ENCODE measurements at regions of chr1 and their contacts with region 1.

Region 1: GRCh38 chr1:55673416-55673815 is 458.3 kb upstream of the USP24 start:
- DNase-seq: no peak
- H3K4me3 ChIP-seq: no peak overlapping the region
- H3K27ac ChIP-seq: no peak overlapping the region
- H3K4me1 ChIP-seq: no peaks in the 10 kb centered on the region
- H3K27me3 ChIP-seq: no peaks in the 10 kb centered on the region
- CTCF ChIP-seq: no peak
- POLR2A ChIP-seq: no peak

Region 2: GRCh38 chr1:55623326-55623725 is 50.1 kb before region 1 on chr1:
- intact Hi-C with region 1: no loop called
- DNase-seq: no peak
- H3K4me3 ChIP-seq: no peak overlapping the region
- H3K27ac ChIP-seq: no peak overlapping the region
- H3K4me1 ChIP-seq: no peaks in the 10 kb centered on the region
- H3K27me3 ChIP-seq: no peaks in the 10 kb centered on the region
- CTCF ChIP-seq: no peak
- POLR2A ChIP-seq: no peak

Region 3: GRCh38 chr1:55634504-55634903 is 38.9 kb before region 1 on chr1:
- intact Hi-C with region 1: no loop called
- DNase-seq: peak in 1 of 2 donors; percentile 56
- H3K4me3 ChIP-seq: no peak overlapping the region
- H3K27ac ChIP-seq: no peak overlapping the region
- H3K4me1 ChIP-seq: no peaks in the 10 kb centered on the region
- H3K27me3 ChIP-seq: no peaks in the 10 kb centered on the region
- CTCF ChIP-seq: no peak
- POLR2A ChIP-seq: no peak

Region 4: DNA sequence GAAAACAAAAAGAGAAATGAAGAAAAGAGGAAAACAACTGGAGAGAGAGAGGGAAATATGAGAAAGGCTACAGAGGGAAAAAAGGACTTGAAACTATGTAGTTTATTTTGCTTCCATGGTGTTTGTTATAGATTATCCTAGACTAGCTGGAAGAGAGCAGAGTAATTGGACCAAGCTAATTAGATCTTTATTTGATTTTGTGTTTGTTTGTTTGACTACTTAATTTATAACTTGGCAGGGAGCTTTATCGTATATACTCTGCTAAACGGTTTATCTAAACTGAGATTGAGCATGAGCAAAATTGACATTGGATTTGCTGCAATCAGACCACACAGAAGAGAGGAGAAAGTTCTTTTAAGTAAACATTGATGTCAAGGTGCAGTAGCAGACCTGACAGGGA is 14.5 kb before region 1 on chr1:
- intact Hi-C with region 1: no loop called
- DNase-seq: no peak
- H3K4me3 ChIP-seq: no peak overlapping the region
- H3K27ac ChIP-seq: peak overlapping the region in 1 of 2 donors; percentile 55
- H3K4me1 ChIP-seq: no peaks in the 10 kb centered on the region
- H3K27me3 ChIP-seq: no peaks in the 10 kb centered on the region
- CTCF ChIP-seq: no peak
- POLR2A ChIP-seq: no peak

Region 5: GRCh38 chr1:55716610-55717009 is 43.2 kb after region 1 on chr1:
- intact Hi-C with region 1: loop called (anchors 2 kb)
- DNase-seq: no peak
- H3K4me3 ChIP-seq: no peak overlapping the region
- H3K27ac ChIP-seq: no peak overlapping the region
- H3K4me1 ChIP-seq: peaks cover 2 to 4% of the 10 kb centered on the region in 2 donors
- H3K27me3 ChIP-seq: no peaks in the 10 kb centered on the region
- CTCF ChIP-seq: no peak
- POLR2A ChIP-seq: no peak